Activated B cell treated with CpG ODN at 0.5 μM for 24 hours (primary cell): ENCODE measurements at regions of chr7 and their contacts with region 1.

Region 1: DNA sequence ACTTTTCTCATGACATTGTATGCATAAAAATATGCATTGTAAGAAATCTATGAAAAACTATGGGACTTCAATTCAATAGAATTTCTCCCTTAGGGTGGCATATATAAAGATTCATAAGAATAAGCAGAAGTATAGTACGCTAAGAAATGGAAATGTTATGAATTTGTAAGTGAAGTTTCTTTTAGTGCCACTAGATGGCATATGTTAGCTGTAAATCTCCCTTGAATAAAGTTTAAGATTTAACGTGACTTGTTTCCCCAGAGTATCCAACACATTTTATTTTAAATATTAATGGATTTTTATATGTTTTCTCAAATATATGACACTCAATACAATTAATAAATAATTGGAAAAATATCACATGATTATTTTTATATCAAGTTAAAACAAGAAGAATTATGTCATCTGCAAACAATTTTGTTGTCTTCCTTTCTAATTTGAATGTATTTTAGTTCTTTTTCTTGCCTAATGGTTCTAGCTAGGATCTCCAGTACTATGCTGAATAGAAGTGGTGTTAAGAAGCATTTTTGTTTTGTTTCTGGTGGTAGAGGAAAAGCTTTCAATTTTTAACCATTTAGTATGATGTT is 287.2 kb downstream of the HGF start:
- DNase-seq: no peak
- ATAC-seq: no peak
- H3K4me3 Mint-ChIP-seq: no peak overlapping the region
- H3K27ac Mint-ChIP-seq: no peak overlapping the region
- H3K4me1 Mint-ChIP-seq: no peaks in the 10 kb centered on the region
- H3K27me3 Mint-ChIP-seq: no peaks in the 10 kb centered on the region
- CTCF ChIP-seq: no peak

Region 2: GRCh38 chr7:81956520-81956919 is 473.8 kb after region 1 on chr7:
- CTCF ChIA-PET with region 1: no interaction called
- POLR2A ChIA-PET with region 1: no interaction called
- intact Hi-C with region 1: loop called (anchors 1 kb)
- DNase-seq: no peak
- ATAC-seq: no peak
- H3K4me3 Mint-ChIP-seq: no peak overlapping the region
- H3K27ac Mint-ChIP-seq: no peak overlapping the region
- H3K4me1 Mint-ChIP-seq: no peaks in the 10 kb centered on the region
- H3K27me3 Mint-ChIP-seq: no peaks in the 10 kb centered on the region
- CTCF ChIP-seq: no peak

Region 3: DNA sequence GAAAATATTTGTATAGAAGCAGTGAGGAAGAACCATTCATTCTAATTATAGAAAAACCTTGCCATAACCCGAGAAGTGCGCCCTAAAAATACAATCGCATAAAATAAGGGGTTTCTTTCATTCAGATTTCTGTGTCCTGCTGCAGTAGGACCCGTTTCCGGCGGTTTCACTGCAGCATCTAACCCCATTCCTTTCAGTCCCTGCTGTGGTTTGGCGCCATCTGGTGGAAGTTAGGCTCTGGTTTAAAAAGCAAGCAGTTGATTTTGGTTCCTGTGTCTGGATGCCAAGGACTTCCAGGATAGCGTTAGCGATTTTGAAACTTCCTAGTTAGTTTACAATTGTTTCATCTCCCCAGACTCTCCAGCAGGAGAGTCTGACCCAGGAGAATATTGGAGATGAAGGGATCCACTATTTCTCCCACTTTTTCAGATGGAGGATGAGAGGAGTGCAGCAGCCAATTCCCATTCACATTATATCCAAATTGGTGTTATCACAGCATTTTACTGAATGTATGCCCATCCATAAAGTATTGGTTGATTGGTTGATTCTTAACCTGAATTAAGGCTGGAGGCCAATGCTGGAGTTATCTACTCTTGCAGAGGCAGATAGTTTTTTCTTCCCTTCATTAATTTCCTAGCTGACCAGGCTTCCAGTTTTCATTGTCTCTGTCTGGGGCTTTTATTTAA is 1089.6 kb after region 1 on chr7:
- CTCF ChIA-PET with region 1: interaction called, 3 read pairs
- POLR2A ChIA-PET with region 1: no interaction called
- intact Hi-C with region 1: loop called (anchors 1 kb)
- DNase-seq: peak; percentile 17
- ATAC-seq: peak; percentile 37
- H3K4me3 Mint-ChIP-seq: no peak overlapping the region
- H3K27ac Mint-ChIP-seq: no peak overlapping the region
- H3K4me1 Mint-ChIP-seq: no peaks in the 10 kb centered on the region
- H3K27me3 Mint-ChIP-seq: no peaks in the 10 kb centered on the region
- CTCF ChIP-seq: peak; percentile 22